CD8-positive, alpha-beta T cell (primary cell): ENCODE measurements at regions of chr12 and their contacts with region 1.

Region 1: DNA sequence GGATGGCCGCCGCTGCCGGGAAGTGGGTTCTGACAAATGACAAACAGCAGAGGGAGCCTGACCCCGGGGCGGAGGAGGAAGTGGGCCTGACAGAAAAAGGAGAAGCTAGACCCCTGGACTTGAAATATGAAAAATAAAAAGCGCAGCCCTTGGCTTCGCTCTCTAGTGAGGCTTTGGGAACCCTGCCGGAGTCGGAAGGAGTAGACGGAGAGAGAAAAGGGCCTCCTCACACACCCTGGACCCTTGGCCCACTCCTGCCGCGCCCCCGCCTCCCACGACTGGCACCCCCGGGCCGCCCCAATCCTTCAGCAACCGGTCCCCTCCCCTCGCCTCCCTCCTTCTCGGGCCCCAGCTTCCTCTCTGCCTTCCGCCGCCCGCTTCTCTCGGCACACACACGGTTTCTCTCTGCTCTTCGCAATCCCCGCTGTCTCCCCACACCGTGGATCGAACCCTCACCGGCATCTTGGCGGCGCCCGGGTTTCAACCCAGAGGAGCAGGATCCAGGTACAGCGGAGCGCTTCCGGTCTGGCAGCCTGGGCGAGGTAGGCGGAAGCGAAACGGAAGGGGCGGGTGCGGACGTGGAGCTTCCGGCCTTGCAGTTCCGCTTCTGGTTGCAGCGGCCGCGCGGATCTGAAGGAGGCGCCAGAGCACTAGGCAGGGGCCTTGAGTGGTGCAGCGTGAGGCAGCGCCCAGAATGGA is at the start of gene ARPC3:
- DNase-seq: peak; percentile 91 to 98 (median 95)
- ATAC-seq: peak; percentile 95
- H3K4me3 ChIP-seq: peak within 1 kb of the TSS; percentile 80 to 95
- H3K4me3 Mint-ChIP-seq: peak within 1 kb of the TSS; percentile 100
- H3K27ac ChIP-seq: peak within 1 kb of the TSS; percentile 93 to 98
- H3K27ac Mint-ChIP-seq: peak within 1 kb of the TSS; percentile 100
- H3K4me1 ChIP-seq: peaks cover 31% of the 10 kb centered on the region
- H3K4me1 Mint-ChIP-seq: peaks cover 35% of the 10 kb centered on the region
- H3K27me3 ChIP-seq: no peaks in the 10 kb centered on the region
- H3K27me3 Mint-ChIP-seq: no peaks in the 10 kb centered on the region
- CTCF ChIP-seq: peak; percentile 76
- total RNA-seq, gene ARPC3: 123 to 136 TPM

Region 2: DNA sequence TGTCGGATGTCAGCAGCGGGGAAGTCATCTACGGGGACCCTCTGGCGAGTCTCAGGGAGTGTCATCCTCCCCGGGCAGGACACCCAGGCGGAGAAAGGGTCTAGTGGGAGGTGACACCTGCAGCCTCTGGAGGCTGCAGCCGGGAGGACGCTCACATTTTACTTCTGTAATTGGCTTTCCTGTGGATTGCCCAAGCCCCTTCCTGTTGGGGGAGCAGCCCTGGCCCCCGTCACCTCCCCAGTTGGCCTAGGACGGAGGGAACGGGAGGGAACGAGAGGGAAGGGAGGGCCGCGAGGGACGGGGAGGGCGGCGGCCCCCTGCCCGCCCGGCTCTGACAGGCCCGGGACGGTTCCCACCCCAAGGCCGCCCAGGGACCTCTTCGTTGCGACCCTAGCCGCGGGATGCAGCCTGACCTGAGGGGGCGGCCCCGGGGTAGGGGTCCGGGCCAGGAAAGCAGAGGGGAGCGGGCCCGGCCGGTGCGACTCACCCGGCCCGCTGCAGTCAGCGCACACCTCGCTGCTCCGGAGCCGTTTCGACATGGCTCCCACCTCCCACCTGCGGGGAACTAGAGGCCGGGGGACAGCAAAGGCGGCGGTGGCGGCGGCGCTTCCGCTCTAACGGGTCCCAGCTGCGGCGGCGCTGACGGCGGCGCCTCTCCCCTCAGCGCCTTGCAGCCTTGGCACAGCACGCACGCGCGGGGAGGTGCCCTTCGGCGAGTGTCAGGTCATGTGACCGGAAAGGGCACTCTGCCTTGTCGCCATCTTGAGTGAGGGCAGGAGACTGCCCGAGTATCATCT is 454.1 kb before region 1 on chr12 and contains the start of gene GIT2:
- CTCF ChIA-PET with region 1: no interaction called
- POLR2A ChIA-PET with region 1: no interaction called
- intact Hi-C with region 1: loop called in 1 of 2 experiments (anchors 5 kb)
- DNase-seq: peak; percentile 87 to 98 (median 94)
- ATAC-seq: peak; percentile 76
- H3K4me3 ChIP-seq: peak within 1 kb of the TSS; percentile 79 to 89
- H3K4me3 Mint-ChIP-seq: peak within 1 kb of the TSS; percentile 97
- H3K27ac ChIP-seq: peak within 1 kb of the TSS; percentile 70 to 85
- H3K27ac Mint-ChIP-seq: peak within 1 kb of the TSS; percentile 89
- H3K4me1 ChIP-seq: peaks cover 34% of the 10 kb centered on the region
- H3K4me1 Mint-ChIP-seq: peaks cover 71% of the 10 kb centered on the region
- H3K27me3 ChIP-seq: no peaks in the 10 kb centered on the region
- H3K27me3 Mint-ChIP-seq: no peaks in the 10 kb centered on the region
- CTCF ChIP-seq: no peak
- total RNA-seq, gene GIT2: 47.6 to 57.9 TPM

Region 3: GRCh38 chr12:110270125-110270962 is 179.6 kb before region 1 on chr12:
- CTCF ChIA-PET with region 1: no interaction called
- POLR2A ChIA-PET with region 1: no interaction called
- intact Hi-C with region 1: no loop called
- DNase-seq: no peak
- ATAC-seq: no peak
- H3K4me3 ChIP-seq: no peak overlapping the region
- H3K4me3 Mint-ChIP-seq: no peak overlapping the region
- H3K27ac ChIP-seq: no peak overlapping the region
- H3K27ac Mint-ChIP-seq: no peak overlapping the region
- H3K4me1 ChIP-seq: no peaks in the 10 kb centered on the region
- H3K4me1 Mint-ChIP-seq: no peaks in the 10 kb centered on the region
- H3K27me3 ChIP-seq: no peaks in the 10 kb centered on the region
- H3K27me3 Mint-ChIP-seq: peaks cover 9% of the 10 kb centered on the region
- CTCF ChIP-seq: no peak

Region 4: DNA sequence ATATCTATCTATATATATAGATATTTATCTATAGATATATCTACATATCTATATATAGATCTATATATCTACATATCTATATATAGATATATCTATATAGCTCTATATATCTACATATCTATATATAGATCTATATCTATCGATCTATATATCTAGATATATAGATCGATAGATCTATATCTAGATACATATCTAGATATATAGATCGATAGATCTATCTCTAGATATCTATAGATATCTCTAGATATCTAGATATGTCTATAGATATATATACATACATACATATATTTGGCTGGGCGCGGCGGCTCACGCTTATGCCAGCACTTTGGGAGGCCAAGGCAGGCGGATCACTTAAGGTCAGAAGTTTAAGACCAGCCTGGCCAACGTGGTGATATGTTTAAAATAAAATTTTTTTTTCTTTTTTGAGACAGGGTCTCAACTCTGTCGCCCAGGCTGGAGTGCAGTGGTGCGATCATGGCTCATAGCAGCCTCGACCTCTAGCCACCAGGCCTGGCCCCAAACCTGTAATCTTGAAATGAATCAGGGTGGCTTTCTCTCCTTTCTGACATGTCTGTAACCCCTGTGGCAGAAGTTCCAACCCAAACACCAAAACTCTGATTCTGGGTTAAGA is 17.9 kb before region 1 on chr12:
- CTCF ChIA-PET with region 1: interaction called, 38 read pairs
- POLR2A ChIA-PET with region 1: interaction called, 14 read pairs
- intact Hi-C with region 1: loop called in 1 of 2 experiments (anchors 1 kb)
- DNase-seq: no peak
- ATAC-seq: no peak
- H3K4me3 ChIP-seq: peak overlapping the region in 1 of 2 experiments; percentile 50
- H3K4me3 Mint-ChIP-seq: no peak overlapping the region
- H3K27ac ChIP-seq: no peak overlapping the region
- H3K27ac Mint-ChIP-seq: no peak overlapping the region
- H3K4me1 ChIP-seq: no peaks in the 10 kb centered on the region
- H3K4me1 Mint-ChIP-seq: peaks cover 2% of the 10 kb centered on the region
- H3K27me3 ChIP-seq: no peaks in the 10 kb centered on the region
- H3K27me3 Mint-ChIP-seq: no peaks in the 10 kb centered on the region
- CTCF ChIP-seq: no peak

Region 5: GRCh38 chr12:110501752-110502738 is 52.1 kb after region 1 on chr12 and contains the starts of genes RAD9B and VPS29:
- CTCF ChIA-PET with region 1: interaction called, 8 read pairs
- POLR2A ChIA-PET with region 1: interaction called, 21 read pairs
- intact Hi-C with region 1: loop called (anchors 1 kb)
- DNase-seq: peak; percentile 98 to 100 (median 99)
- ATAC-seq: peak; percentile 92
- H3K4me3 ChIP-seq: peak within 1 kb of the TSS; percentile 73 to 79
- H3K4me3 Mint-ChIP-seq: peak within 1 kb of the TSS; percentile 97
- H3K27ac ChIP-seq: peak within 1 kb of the TSS; percentile 74 to 89
- H3K27ac Mint-ChIP-seq: peak within 1 kb of the TSS; percentile 97
- H3K4me1 ChIP-seq: peaks cover 17% of the 10 kb centered on the region
- H3K4me1 Mint-ChIP-seq: peaks cover 38% of the 10 kb centered on the region
- H3K27me3 ChIP-seq: no peaks in the 10 kb centered on the region
- H3K27me3 Mint-ChIP-seq: no peaks in the 10 kb centered on the region
- CTCF ChIP-seq: no peak
- total RNA-seq, gene RAD9B: 0.57 to 1.5 TPM
- total RNA-seq, gene VPS29: 49.6 to 53.5 TPM

Region 6: GRCh38 chr12:110555577-110556406 is 105.8 kb after region 1 on chr12:
- CTCF ChIA-PET with region 1: interaction called, 19 read pairs
- POLR2A ChIA-PET with region 1: interaction called, 5 read pairs
- intact Hi-C with region 1: loop called (anchors 1 to 2 kb)
- DNase-seq: no peak
- ATAC-seq: no peak
- H3K4me3 ChIP-seq: no peak overlapping the region
- H3K4me3 Mint-ChIP-seq: no peak overlapping the region
- H3K27ac ChIP-seq: no peak overlapping the region
- H3K27ac Mint-ChIP-seq: peak overlapping the region; percentile 24
- H3K4me1 ChIP-seq: peaks cover 24% of the 10 kb centered on the region
- H3K4me1 Mint-ChIP-seq: peaks cover 49% of the 10 kb centered on the region
- H3K27me3 ChIP-seq: no peaks in the 10 kb centered on the region
- H3K27me3 Mint-ChIP-seq: no peaks in the 10 kb centered on the region
- CTCF ChIP-seq: no peak

Region 7: DNA sequence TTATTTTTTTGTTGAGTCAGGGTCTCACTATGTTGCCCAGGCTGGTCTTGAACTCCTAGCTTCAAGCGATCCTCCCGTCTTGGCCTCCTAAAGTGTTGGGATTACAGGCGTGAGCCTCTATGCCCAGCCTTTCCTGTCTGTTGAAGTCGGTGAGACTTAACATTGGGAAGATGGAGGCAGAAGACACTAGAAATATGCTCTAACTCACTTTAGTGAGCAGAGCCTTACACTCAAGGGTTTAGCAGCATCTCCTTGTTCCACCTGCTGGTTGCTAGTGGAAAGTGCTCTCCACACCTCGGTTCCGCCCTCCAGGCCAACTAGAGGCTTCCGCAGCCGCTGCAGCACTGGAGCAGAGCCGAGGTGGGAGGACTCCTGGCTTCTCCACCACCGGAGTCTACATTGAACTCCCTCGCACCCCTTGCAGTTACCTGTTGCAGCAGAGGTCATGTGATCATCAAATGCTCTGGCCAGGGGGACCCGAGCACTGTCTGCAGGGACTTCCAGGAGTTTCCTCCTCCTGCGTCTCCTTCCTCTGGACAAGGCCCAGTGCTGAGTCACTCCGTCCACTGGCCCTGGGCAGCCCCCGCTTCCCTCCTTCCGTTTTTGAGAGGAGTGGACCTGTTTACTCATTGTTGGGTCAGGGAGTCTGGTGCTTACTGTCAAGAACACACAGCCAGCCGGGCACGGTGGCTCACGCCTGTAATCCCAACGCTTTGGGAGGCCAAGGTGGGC is 248.4 kb after region 1 on chr12:
- CTCF ChIA-PET with region 1: interaction called, 9 read pairs
- POLR2A ChIA-PET with region 1: no interaction called
- intact Hi-C with region 1: loop called (anchors 1 kb)
- DNase-seq: peak; percentile 57 to 90 (median 76)
- ATAC-seq: peak; percentile 100
- H3K4me3 ChIP-seq: no peak overlapping the region
- H3K4me3 Mint-ChIP-seq: peak overlapping the region; percentile 16
- H3K27ac ChIP-seq: no peak overlapping the region
- H3K27ac Mint-ChIP-seq: peak overlapping the region; percentile 34
- H3K4me1 ChIP-seq: peaks cover 7% of the 10 kb centered on the region
- H3K4me1 Mint-ChIP-seq: peaks cover 9% of the 10 kb centered on the region
- H3K27me3 ChIP-seq: no peaks in the 10 kb centered on the region
- H3K27me3 Mint-ChIP-seq: no peaks in the 10 kb centered on the region
- CTCF ChIP-seq: peak; percentile 83

Region 8: DNA sequence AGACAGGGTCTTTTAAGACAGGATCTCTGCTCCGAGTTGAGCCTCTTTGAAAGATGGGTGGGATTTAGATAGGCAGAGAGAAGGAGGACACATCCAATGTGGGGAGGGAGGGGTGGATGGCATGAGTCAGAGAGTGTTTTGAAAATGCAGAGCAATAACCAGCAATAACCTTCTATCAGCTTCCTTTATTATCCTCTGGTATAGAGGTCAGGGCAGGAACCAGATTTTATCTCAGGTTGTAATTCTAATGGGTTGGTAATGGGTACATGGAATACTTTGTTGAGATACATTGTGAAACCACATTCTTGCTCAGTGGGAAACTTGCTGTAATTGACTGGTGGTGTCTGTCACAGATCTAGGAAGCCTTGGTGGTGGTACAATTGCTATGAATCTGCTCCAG is 359.2 kb after region 1 on chr12:
- CTCF ChIA-PET with region 1: no interaction called
- POLR2A ChIA-PET with region 1: no interaction called
- intact Hi-C with region 1: no loop called
- DNase-seq: no peak
- ATAC-seq: no peak
- H3K4me3 ChIP-seq: no peak overlapping the region
- H3K4me3 Mint-ChIP-seq: no peak overlapping the region
- H3K27ac ChIP-seq: no peak overlapping the region
- H3K27ac Mint-ChIP-seq: no peak overlapping the region
- H3K4me1 ChIP-seq: no peaks in the 10 kb centered on the region
- H3K4me1 Mint-ChIP-seq: no peaks in the 10 kb centered on the region
- H3K27me3 ChIP-seq: peaks cover 0 to 5% of the 10 kb centered on the region in 2 experiments
- H3K27me3 Mint-ChIP-seq: peaks cover 4% of the 10 kb centered on the region
- CTCF ChIP-seq: no peak

Region 9: DNA sequence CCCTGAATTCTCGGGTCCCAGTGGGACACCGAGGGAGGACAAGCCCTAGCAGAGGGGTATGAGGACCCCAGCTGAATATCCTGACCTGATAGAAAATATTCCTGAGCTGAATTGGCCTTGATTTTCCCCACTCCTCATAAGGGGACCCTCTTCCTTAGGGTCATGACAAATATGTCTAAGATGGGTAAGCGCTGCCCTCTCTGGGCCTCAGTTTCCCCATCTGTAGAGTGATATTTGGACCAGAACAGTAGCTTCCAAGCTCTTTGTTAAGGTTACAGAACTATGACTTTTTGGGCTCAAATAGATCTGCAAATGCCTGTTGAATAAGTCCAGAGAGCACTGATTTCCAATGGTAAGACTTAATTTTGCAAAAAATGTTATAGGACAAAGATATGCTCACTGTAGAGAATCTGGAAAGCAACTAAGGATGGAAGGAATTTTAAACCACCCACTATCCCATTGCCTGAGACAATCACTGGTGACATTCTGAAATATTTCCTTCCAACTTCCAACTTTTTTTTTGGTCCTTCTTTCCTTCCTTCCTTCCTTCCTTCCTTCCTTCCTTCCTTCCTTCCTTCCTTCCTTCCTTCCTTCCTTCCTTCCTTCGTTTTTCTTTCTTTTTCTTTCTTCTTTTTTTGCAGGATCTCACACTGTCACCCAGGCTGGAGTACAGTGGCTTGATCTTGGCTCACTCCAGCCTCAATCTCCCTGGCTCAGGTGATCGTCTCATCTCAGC is 438.5 kb after region 1 on chr12:
- CTCF ChIA-PET with region 1: interaction called, 14 read pairs
- POLR2A ChIA-PET with region 1: interaction called, 3 read pairs
- intact Hi-C with region 1: loop called (anchors 1 kb)
- DNase-seq: no peak
- ATAC-seq: no peak
- H3K4me3 ChIP-seq: no peak overlapping the region
- H3K4me3 Mint-ChIP-seq: peak overlapping the region; percentile 94
- H3K27ac ChIP-seq: no peak overlapping the region
- H3K27ac Mint-ChIP-seq: no peak overlapping the region
- H3K4me1 ChIP-seq: no peaks in the 10 kb centered on the region
- H3K4me1 Mint-ChIP-seq: peaks cover 4% of the 10 kb centered on the region
- H3K27me3 ChIP-seq: no peaks in the 10 kb centered on the region
- H3K27me3 Mint-ChIP-seq: no peaks in the 10 kb centered on the region
- CTCF ChIP-seq: peak; percentile 48